Right ventricle myocardium inferior (tissue), 1 donor: ENCODE measurements at regions of chr2 and their contacts with region 1.

Region 1: GRCh38 chr2:73828818-73829570 is at the start of gene STAMBP:
- DNase-seq: peak; percentile 97
- ATAC-seq: peak; percentile 98
- total RNA-seq, gene STAMBP: 27.8 TPM

Region 2: DNA sequence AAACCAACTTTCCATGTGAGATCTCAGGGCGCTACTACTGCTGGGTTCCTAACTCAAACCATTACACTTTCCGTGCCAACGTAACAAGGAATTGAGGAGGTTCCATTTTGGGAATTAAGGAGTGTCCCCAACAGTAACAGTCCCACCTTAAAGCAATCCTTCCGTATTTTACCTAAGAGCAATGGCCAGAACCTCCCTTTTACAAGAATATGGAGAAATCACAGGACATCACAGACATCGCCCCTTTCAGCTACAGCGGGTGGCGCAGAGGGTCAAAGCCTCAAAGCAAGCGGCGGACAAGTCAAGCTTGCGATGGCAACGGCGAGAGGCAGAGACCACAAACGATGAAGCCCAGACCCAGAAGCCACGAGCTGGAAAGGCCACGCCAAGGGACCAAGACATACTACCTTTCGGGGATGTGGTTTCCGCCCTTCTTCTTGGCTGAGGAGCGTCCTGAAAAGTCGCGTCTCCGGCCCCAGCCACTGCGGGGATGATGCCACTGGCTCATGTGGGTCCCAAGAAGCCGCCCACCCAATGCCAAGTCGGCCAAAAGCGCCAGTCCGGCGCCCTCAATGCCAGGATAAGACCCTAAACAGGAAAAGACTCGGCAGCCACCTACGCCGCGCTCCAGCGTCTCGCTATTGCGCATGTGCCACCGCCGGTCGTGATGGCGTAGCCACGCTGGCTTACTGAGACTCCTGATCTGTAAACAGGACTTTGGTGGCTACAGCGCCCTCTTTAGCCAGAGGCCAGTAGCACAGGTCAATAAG is 49.3 kb before region 1 on chr2 and contains the start of gene DUSP11:
- intact Hi-C with region 1: no loop called
- DNase-seq: peak; percentile 97
- ATAC-seq: peak; percentile 100
- total RNA-seq, gene DUSP11: 10.6 TPM

Region 3: GRCh38 chr2:73877071-73877802 is 48.2 kb after region 1 on chr2:
- intact Hi-C with region 1: no loop called
- DNase-seq: no peak
- ATAC-seq: peak; percentile 39

Region 4: DNA sequence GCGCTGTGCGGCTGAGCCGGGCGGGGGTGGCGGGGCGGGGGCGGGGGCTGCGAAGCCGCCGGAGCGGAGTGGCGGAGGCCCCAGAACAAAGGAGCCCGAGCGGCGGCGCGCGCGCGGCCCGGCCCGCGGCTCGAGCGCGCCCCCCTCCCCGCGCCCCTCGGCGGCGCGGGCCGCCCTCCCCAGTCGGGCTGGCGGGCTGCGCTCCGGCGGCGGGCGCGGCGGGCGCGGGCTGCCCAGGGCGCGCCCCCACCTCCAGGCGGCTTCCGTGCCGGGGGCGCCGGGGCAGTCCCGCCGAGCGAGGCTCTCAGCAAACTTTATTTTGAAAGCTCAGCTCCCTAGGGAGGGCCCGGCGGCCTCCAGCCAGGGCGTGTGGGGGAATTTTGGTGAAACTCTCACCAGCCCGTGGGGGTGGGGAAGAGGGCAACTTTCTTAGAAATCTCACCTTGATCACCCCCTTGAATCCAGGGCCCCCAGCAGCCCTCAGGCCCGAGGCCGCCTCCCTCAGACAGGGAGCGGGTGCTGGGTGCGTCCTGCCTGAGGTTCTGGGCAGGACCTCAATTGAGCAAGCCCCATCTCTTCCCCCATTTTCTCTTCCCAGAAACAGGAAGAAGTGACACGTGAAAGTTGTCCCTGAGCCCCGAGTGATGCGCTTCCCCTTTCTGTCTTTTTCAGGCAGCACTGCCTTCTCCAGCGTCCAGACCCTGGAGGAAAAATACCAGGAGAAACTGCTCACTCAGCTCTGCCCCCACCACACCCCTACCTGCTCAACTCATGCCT is 156.5 kb after region 1 on chr2:
- intact Hi-C with region 1: loop called (anchors 10 kb)
- DNase-seq: peak; percentile 80
- ATAC-seq: peak; percentile 38

Region 5: GRCh38 chr2:74147727-74148456 is 318.9 kb after region 1 on chr2 and contains the start of gene BOLA3:
- intact Hi-C with region 1: loop called (anchors 10 kb)
- DNase-seq: peak; percentile 93
- ATAC-seq: peak; percentile 95
- total RNA-seq, gene BOLA3: 88.4 TPM

Region 6: DNA sequence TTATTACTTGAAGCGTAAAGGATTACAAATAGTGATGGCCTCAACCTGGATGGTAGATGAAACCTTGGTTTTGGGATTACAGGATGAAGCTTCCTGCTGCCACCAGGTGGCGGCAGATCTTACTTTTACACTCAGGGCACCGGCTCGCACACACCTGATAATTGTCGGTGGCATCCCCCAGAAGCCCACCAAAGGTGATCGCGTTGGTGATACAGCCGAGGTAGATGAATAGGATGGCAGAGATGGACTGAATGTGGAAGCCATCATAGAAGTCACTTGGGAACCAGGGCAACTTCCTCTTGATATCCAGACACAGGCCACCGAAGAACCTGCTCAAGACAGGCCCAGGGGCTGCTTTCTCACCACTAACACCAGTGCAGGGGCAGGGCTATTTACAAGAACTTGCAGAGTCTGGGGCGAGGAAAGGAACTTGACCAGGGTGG is 421.2 kb after region 1 on chr2:
- intact Hi-C with region 1: loop called (anchors 10 kb)
- DNase-seq: no peak
- ATAC-seq: no peak

Region 7: DNA sequence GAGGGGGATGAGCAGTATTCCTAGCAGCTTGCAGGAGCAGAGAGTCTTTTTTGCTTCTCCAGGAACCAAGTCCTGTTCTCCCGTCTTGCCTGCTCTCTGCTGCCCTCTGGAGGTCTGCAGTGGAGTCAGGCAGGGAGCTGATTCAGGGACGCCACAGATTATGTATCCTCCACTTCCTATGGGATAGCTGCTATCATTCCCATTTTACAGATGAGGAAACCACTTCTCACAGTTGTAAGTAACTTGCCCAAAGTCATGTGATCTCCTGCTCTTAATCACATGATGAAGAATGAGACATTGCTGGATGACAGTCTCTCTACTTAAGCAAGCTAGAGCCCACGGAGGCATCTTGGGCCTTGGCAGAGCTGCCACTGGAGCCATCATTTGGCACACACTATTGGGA is 505.9 kb after region 1 on chr2:
- intact Hi-C with region 1: loop called (anchors 10 kb)
- DNase-seq: peak; percentile 78
- ATAC-seq: peak; percentile 80

Region 8: GRCh38 chr2:74414881-74415761 is 586.1 kb after region 1 on chr2:
- intact Hi-C with region 1: loop called (anchors 10 kb)
- DNase-seq: peak; percentile 89
- ATAC-seq: peak; percentile 81